Sigmoid colon (tissue), 7 donors: ENCODE measurements at regions of chr4 and their contacts with region 1.

Region 1: GRCh38 chr4:109815151-109816081 is at the start of gene GAR1:
- DNase-seq: peak; percentile 94
- H3K4me3 ChIP-seq: peak within 1 kb of the TSS; percentile 65 to 83 (median 80)
- H3K27ac ChIP-seq: peak within 1 kb of the TSS; percentile 80 to 91 (median 86)
- H3K4me1 ChIP-seq: peaks cover 0 to 17% (median 14%) of the 10 kb centered on the region in 4 donors
- H3K27me3 ChIP-seq: no peaks in the 10 kb centered on the region
- CTCF ChIP-seq: no peak
- EP300 ChIP-seq: no peak
- POLR2A ChIP-seq: peak in 1 of 2 donors; percentile 71
- total RNA-seq, gene GAR1: 4.4 to 8.6 (median 5.4) TPM

Region 2: GRCh38 chr4:108620101-108620932 is 1195.1 kb before region 1 on chr4 and contains the start of gene RPL34:
- intact Hi-C with region 1: loop called (anchors 10 kb)
- DNase-seq: peak; percentile 99
- H3K4me3 ChIP-seq: peak within 1 kb of the TSS; percentile 62 to 83 (median 70)
- H3K27ac ChIP-seq: peak within 1 kb of the TSS; percentile 80 to 90 (median 86)
- H3K4me1 ChIP-seq: peaks cover 0 to 33% (median 17%) of the 10 kb centered on the region in 4 donors
- H3K27me3 ChIP-seq: no peaks in the 10 kb centered on the region
- CTCF ChIP-seq: no peak
- EP300 ChIP-seq: peak in 2 of 4 donors; percentile 44 to 63
- POLR2A ChIP-seq: peak; percentile 96 to 97
- total RNA-seq, gene RPL34: 926 to 1,691 (median 1,619) TPM

Region 3: GRCh38 chr4:109433205-109434006 is 382.0 kb before region 1 on chr4 and contains the start of gene SEC24B:
- intact Hi-C with region 1: loop called (anchors 5 kb)
- DNase-seq: peak; percentile 92
- H3K4me3 ChIP-seq: peak within 1 kb of the TSS; percentile 63 to 87 (median 80)
- H3K27ac ChIP-seq: peak within 1 kb of the TSS; percentile 87 to 94 (median 93)
- H3K4me1 ChIP-seq: peaks cover 0 to 50% (median 38%) of the 10 kb centered on the region in 4 donors
- H3K27me3 ChIP-seq: no peaks in the 10 kb centered on the region
- CTCF ChIP-seq: peak; percentile 10 to 93 (median 26)
- EP300 ChIP-seq: no peak
- POLR2A ChIP-seq: no peak
- total RNA-seq, gene SEC24B: 35.3 to 41.8 (median 40.0) TPM

Region 4: DNA sequence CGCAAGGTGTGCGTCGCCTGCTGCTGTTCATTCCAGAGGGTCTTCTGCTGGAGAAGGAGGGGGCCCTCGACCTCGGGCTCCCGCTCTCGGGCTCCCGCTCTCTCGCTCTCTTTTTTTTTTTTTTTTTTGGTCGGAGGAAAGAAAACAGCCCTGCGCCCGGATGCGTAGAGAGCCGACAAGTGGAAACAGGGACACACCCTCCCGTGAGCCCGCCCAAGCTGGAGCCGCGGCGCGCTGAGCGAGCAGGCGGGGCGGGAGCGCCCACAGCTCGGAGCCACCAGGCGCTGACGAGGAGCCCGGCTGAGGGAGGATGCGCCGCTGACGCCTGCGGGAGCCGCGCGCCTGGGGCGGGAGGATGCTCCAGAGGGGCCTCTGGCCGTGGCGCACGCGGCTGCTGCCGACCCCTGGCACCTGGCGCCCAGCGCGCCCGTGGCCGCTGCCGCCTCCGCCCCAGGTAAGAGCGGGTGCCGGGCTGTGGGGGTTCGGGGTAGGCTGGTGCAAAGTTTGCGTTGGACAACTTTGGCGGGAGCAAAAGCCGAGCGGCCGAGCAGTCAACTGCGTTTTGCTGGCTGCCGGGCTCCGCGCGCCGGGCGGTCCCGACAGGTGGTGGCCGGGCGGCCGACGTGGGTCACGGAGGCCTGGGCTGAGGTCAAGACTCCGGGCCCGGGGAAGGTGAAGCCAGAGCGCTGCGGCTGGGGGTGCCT is 255.3 kb before region 1 on chr4 and contains the start of gene MCUB:
- intact Hi-C with region 1: loop called (anchors 2 kb)
- DNase-seq: peak; percentile 93
- H3K4me3 ChIP-seq: peak within 1 kb of the TSS; percentile 51 to 81 (median 67)
- H3K27ac ChIP-seq: peak within 1 kb of the TSS; percentile 68 to 93 (median 84)
- H3K4me1 ChIP-seq: peaks cover 0 to 23% (median 17%) of the 10 kb centered on the region in 4 donors
- H3K27me3 ChIP-seq: no peaks in the 10 kb centered on the region
- CTCF ChIP-seq: no peak
- EP300 ChIP-seq: no peak
- POLR2A ChIP-seq: no peak
- total RNA-seq, gene MCUB: 5.0 to 10.9 (median 8.8) TPM

Region 5: DNA sequence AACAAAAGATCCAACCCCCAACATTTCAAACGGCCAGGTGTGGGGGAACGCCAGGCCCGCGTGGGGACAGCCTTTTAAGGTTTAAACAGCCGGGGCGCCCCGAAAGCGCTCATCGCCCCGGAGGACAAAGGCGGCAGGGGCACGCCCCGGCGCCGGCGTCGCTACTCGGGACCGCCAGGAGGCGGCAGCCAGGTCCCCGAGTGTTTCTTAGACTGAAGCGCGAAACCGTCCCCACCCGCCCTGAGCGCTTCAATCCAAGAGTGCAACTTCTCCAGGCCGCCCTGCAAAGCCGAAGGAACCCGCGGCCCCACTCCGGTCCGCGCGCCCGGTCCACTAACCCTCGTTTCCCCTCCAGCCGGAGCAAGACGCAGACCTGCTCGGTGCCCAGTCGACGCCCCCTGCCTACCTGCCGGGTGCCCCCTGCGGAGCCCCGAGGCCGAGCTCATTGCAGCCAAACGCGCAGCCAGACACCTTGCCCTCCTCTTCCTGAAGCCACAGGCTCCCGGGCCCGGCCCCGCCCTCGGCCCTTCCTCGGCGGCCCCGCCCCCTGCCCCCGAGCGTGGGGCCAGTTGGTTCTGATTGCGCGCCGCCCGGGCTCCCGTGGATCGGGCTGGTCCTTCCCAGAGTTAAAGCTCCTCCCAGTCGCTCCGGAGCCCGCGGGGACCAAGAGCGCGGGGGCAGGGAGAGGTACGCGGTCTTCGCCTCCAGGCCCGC is 112.3 kb before region 1 on chr4 and contains the start of gene CASP6:
- intact Hi-C with region 1: loop called (anchors 1 kb)
- DNase-seq: peak; percentile 91
- H3K4me3 ChIP-seq: peak within 1 kb of the TSS; percentile 61 to 86 (median 74)
- H3K27ac ChIP-seq: peak within 1 kb of the TSS; percentile 85 to 90 (median 89)
- H3K4me1 ChIP-seq: peaks cover 0 to 20% (median 16%) of the 10 kb centered on the region in 4 donors
- H3K27me3 ChIP-seq: no peaks in the 10 kb centered on the region
- CTCF ChIP-seq: peak; percentile 35 to 78 (median 70)
- EP300 ChIP-seq: no peak
- POLR2A ChIP-seq: peak in 1 of 2 donors; percentile 55
- total RNA-seq, gene CASP6: 18.2 to 41.3 (median 26.8) TPM

Region 6: GRCh38 chr4:109729718-109730618 is 85.4 kb before region 1 on chr4 and contains the start of gene PLA2G12A:
- intact Hi-C with region 1: loop called (anchors 1 kb)
- DNase-seq: peak; percentile 82
- H3K4me3 ChIP-seq: peak within 1 kb of the TSS; percentile 57 to 96 (median 70)
- H3K27ac ChIP-seq: peak within 1 kb of the TSS; percentile 74 to 81 (median 78)
- H3K4me1 ChIP-seq: peaks cover 0 to 17% (median 10%) of the 10 kb centered on the region in 4 donors
- H3K27me3 ChIP-seq: no peaks in the 10 kb centered on the region
- CTCF ChIP-seq: no peak
- EP300 ChIP-seq: no peak
- POLR2A ChIP-seq: no peak
- total RNA-seq, gene PLA2G12A: 18.0 to 27.7 (median 23.0) TPM

Region 7: GRCh38 chr4:110193822-110194761 is 378.7 kb after region 1 on chr4:
- intact Hi-C with region 1: loop called (anchors 10 kb)
- DNase-seq: peak; percentile 83
- H3K4me3 ChIP-seq: no peak overlapping the region
- H3K27ac ChIP-seq: peak overlapping the region in 3 of 4 donors; percentile 8 to 35 (median 26)
- H3K4me1 ChIP-seq: peaks cover 0 to 22% (median 14%) of the 10 kb centered on the region in 4 donors
- H3K27me3 ChIP-seq: no peaks in the 10 kb centered on the region
- CTCF ChIP-seq: no peak
- EP300 ChIP-seq: no peak
- POLR2A ChIP-seq: peak; percentile 14 to 52

Region 8: DNA sequence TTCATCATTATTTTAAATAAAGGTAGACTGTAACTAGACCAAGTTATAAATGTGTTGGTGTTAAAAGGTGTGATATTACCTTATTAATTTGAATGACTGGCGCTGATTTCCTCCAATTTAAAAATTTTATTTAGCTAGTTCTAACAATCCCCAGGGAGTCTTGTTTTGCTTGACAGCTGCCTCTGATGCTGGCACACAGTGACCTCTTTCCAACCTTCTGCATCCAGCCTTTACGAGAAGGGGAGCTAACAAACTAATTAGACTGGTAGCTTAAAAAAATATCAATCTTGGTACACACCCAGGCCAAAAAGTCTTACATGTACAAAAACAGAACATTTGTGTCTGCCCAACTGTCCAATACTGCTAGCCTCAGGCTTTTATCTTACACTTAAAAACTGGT is 608.7 kb after region 1 on chr4:
- intact Hi-C with region 1: no loop called
- DNase-seq: no peak
- H3K4me3 ChIP-seq: no peak overlapping the region
- H3K27ac ChIP-seq: no peak overlapping the region
- H3K4me1 ChIP-seq: no peaks in the 10 kb centered on the region
- H3K27me3 ChIP-seq: no peaks in the 10 kb centered on the region
- CTCF ChIP-seq: no peak
- EP300 ChIP-seq: no peak
- POLR2A ChIP-seq: no peak